B cell (primary cell): ENCODE measurements at regions of chr20 and their contacts with region 1.

Region 1: DNA sequence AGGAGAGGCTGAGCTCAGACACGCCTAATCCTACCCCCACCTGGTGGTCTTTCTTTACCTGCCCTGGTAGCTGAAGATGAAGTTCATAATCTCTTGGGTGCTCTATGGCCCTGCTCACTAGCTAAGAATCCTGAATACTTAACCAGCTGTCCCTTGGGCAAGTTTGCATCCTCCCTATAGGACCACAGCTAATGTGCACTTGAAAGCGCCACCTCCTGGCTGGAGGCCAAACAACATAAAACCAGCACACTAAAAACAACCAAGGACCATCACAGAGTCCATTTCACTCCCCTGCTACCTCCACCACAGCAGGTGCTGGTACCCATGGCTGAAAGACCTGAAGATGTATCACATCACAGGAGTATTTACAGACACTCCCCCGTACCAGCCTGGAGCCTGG is 155.5 kb upstream of the SLC24A3 start:
- DNase-seq: peak; percentile 22
- ATAC-seq: no peak
- H3K4me3 ChIP-seq: no peak overlapping the region
- H3K4me3 Mint-ChIP-seq: no peak overlapping the region
- H3K27ac ChIP-seq: no peak overlapping the region
- H3K27ac Mint-ChIP-seq: no peak overlapping the region
- H3K4me1 ChIP-seq: no peaks in the 10 kb centered on the region
- H3K4me1 Mint-ChIP-seq: no peaks in the 10 kb centered on the region
- H3K27me3 ChIP-seq: no peaks in the 10 kb centered on the region
- H3K27me3 Mint-ChIP-seq: no peaks in the 10 kb centered on the region
- CTCF ChIP-seq: peak; percentile 23

Region 2: DNA sequence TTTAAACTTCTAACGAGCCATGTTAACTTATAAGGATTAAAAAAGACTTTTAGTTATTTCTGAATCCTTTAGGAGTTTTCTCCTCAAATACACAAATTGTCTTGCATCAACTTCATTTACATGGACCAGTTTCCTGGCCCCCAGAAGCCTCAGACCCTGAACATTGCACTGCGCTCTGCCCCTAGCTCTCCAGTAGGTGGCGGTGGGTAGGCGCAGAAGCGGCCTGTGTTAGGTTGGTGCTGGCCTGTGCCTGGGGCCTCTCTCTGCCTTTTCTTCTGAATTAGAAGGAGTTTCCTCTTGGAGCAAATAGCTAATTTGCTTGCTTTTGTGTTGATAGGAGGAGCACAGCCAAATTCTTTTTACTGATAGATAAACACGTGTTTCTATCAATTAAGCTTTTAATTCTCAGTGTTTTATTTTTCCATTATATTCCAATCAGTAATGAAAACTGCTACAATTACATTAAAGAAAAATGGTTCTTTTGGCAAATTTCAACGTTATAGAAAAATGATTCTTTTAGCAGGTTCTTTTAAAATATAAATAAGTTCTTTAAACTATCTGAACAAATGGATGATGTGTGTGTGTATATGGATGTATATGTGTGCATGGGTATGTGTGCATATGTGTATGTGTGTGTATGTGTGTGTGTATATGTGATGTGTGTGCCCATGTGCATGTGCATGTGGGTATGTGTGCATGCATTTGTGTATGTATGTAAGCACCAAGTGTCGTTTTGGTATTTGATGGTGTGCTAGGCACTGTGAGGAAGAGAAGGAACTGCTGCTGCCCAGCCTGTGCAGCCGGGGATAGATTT is 424.5 kb before region 1 on chr20:
- CTCF ChIA-PET with region 1: interaction called, 30 read pairs
- POLR2A ChIA-PET with region 1: no interaction called
- intact Hi-C with region 1: no loop called
- DNase-seq: peak; percentile 67
- ATAC-seq: peak; percentile 93
- H3K4me3 ChIP-seq: no peak overlapping the region
- H3K4me3 Mint-ChIP-seq: no peak overlapping the region
- H3K27ac ChIP-seq: no peak overlapping the region
- H3K27ac Mint-ChIP-seq: no peak overlapping the region
- H3K4me1 ChIP-seq: no peaks in the 10 kb centered on the region
- H3K4me1 Mint-ChIP-seq: no peaks in the 10 kb centered on the region
- H3K27me3 ChIP-seq: no peaks in the 10 kb centered on the region
- H3K27me3 Mint-ChIP-seq: no peaks in the 10 kb centered on the region
- CTCF ChIP-seq: peak; percentile 95